ENCODE measurements at regions of chr7 and their contacts with region 1.

Region 1: DNA sequence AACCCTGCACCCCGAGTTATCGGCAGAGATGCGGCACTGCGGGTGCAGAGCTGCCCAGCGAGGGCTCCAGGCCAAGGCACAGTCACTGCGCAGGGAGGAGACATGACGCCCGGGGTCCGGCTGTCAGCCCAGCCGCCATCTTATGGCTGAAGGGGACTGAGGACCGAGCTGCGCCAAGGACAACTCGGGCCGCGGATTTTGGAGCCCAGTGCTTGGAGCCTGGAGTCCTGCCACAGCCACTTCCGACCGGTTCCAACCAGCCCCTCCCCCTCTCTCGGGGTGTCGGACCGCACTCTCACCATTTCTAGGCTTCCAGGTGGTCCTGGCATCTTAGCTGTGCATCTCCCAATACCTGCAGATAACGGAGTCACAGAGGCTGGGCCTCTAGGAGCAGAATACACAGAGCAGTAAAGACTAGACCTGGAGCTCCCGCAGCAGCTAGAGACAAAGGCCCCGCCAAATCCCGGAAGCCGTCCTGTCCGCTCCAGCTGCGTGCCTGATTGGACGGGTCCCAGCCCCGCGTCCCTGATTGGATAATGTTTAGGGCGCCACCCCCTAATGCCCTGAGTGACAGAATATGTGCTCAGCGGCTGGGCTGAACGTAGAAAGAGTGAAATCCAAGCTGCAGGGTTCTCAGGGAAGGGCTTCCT is at the start of gene ZNF680:
- DNase-seq: peak; percentile 87
- H3K4me3 Mint-ChIP-seq: peak within 1 kb of the TSS; percentile 98
- H3K27ac Mint-ChIP-seq: peak within 1 kb of the TSS; percentile 95
- H3K4me1 Mint-ChIP-seq: peaks cover 8% of the 10 kb centered on the region
- H3K27me3 Mint-ChIP-seq: peaks cover 2% of the 10 kb centered on the region
- total RNA-seq, gene ZNF680: 10.9 and 11.3 TPM in 2 replicates

Region 2: GRCh38 chr7:63925623-63926460 is 636.9 kb before region 1 on chr7:
- intact Hi-C with region 1: loop called (anchors 5 kb)
- DNase-seq: peak; percentile 78
- H3K4me3 Mint-ChIP-seq: peak overlapping the region; percentile 84
- H3K27ac Mint-ChIP-seq: peak overlapping the region; percentile 81
- H3K4me1 Mint-ChIP-seq: peaks cover 2% of the 10 kb centered on the region
- H3K27me3 Mint-ChIP-seq: no peaks in the 10 kb centered on the region

Region 3: DNA sequence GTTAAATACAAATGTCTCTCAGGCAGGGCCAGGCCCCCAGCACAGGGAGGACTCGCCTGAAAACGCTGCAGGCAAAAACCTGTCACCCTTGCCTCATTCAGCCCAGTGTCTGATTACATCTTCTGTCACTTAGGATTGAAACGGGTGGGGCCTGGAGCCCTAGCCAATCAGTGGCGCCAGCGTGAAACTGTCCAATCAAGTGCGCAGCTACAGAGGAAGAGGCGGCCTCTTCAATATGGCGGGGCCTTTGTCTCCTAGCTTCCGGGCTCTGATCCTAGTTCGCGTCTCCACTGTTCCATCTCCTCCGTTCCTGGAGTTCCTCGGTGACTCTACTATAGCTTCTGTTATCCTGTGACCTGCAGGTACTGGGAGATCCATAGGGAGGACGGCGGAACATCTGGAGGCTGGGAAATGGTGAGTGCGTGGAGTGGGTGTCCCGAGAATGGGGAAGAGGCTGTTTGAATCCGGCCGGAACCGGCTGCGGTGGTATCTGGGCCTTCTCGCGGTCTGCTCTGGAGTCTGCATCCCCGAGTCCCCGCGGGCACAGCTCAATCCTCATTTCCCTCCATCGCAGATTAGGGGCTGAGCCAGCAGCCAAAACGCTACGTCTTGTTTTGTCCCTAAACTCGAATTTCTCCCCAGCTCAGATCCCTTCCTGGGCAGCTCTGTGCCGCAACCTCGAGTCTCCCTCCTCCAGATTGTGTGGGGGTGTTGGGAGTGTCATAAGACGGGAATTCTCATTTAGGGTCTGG is 248.8 kb before region 1 on chr7 and contains the start of gene ZNF736:
- intact Hi-C with region 1: loop called (anchors 1 kb)
- DNase-seq: peak; percentile 82
- H3K4me3 Mint-ChIP-seq: peak within 1 kb of the TSS; percentile 99
- H3K27ac Mint-ChIP-seq: peak within 1 kb of the TSS; percentile 99
- H3K4me1 Mint-ChIP-seq: peaks cover 9% of the 10 kb centered on the region
- H3K27me3 Mint-ChIP-seq: no peaks in the 10 kb centered on the region
- total RNA-seq, gene ZNF736: 17.6 and 20.6 TPM in 2 replicates

Region 4: GRCh38 chr7:64533756-64534155 is 29.0 kb before region 1 on chr7:
- intact Hi-C with region 1: no loop called
- DNase-seq: no peak
- H3K4me3 Mint-ChIP-seq: no peak overlapping the region
- H3K27ac Mint-ChIP-seq: no peak overlapping the region
- H3K4me1 Mint-ChIP-seq: peaks cover 3% of the 10 kb centered on the region
- H3K27me3 Mint-ChIP-seq: no peaks in the 10 kb centered on the region

Region 5: GRCh38 chr7:64794171-64794844 is 231.6 kb after region 1 on chr7 and contains the start of gene ZNF138:
- intact Hi-C with region 1: loop called (anchors 5 kb)
- DNase-seq: peak; percentile 89
- H3K4me3 Mint-ChIP-seq: peak within 1 kb of the TSS; percentile 99
- H3K27ac Mint-ChIP-seq: peak within 1 kb of the TSS; percentile 97
- H3K4me1 Mint-ChIP-seq: peaks cover 11% of the 10 kb centered on the region
- H3K27me3 Mint-ChIP-seq: no peaks in the 10 kb centered on the region
- total RNA-seq, gene ZNF138: 7.9 and 8.1 TPM in 2 replicates

Region 6: GRCh38 chr7:65373608-65374351 is 811.0 kb after region 1 on chr7 and contains the start of gene ZNF92:
- intact Hi-C with region 1: loop called (anchors 10 kb)
- DNase-seq: peak; percentile 95
- H3K4me3 Mint-ChIP-seq: peak within 1 kb of the TSS; percentile 99
- H3K27ac Mint-ChIP-seq: peak within 1 kb of the TSS; percentile 93
- H3K4me1 Mint-ChIP-seq: peaks cover 17% of the 10 kb centered on the region
- H3K27me3 Mint-ChIP-seq: no peaks in the 10 kb centered on the region
- total RNA-seq, gene ZNF92: 15.2 and 17.0 TPM in 2 replicates

Measured in activated T-helper 2 cell treated with anti-CD3 and anti-CD28 coated beads, Interferon-gamma antibody, Interleukin-2, Interleukin-4, amounts not matched to agents 10 μg/mL and 5 μg/mL and 100 μg/mL, durations not matched to agents 14 hours and 24 hours and 36 hours (primary cell).